ENCODE measurements at regions of chr9 and their contacts with region 1.

Region 1: GRCh38 chr9:93965830-93966577 is 10.8 kb upstream of the BARX1 start:
- DNase-seq: no peak
- ATAC-seq: no peak

Region 2: DNA sequence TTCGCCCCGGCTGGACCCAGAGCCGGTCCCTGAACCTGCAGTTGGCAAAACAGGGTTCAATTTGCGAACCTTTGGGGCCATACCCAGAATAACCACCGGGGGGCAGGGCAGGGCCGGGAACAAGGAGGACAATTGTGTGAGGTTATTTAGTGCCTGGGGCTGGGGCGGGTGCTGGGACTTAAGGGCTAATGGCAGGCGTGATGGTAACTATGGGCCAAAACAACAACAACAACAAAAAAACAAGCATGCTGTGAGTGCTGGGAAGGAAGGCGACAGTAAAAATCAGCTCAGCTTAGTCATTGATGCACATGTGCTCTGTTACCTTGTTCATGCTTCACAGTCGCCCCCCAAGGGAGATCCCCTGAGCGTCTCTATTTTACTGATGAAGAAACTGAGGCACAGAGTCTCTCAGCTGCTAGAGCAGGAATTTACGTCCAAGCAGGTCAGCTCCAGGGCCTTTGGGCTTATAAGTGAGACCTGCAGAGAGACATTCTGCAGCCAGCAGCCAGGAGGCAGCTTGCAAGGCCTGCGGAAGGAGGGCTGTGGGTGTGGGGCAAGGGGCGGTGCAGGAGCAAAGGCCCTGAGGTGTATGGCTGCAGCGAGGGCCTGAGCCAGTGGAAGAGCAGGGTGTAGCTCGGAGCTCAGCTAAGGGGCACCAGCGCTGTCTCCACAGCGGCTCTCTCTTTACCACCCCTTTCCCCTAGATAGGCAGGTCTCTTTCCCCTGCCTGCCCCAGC is 283.6 kb before region 1 on chr9:
- intact Hi-C with region 1: loop called (anchors 5 kb)
- DNase-seq: peak; percentile 76
- ATAC-seq: peak; percentile 44

Measured in sciatic nerve (tissue), 2 donors.